ENCODE measurements at regions of chr5 and their contacts with region 1.

Region 1: DNA sequence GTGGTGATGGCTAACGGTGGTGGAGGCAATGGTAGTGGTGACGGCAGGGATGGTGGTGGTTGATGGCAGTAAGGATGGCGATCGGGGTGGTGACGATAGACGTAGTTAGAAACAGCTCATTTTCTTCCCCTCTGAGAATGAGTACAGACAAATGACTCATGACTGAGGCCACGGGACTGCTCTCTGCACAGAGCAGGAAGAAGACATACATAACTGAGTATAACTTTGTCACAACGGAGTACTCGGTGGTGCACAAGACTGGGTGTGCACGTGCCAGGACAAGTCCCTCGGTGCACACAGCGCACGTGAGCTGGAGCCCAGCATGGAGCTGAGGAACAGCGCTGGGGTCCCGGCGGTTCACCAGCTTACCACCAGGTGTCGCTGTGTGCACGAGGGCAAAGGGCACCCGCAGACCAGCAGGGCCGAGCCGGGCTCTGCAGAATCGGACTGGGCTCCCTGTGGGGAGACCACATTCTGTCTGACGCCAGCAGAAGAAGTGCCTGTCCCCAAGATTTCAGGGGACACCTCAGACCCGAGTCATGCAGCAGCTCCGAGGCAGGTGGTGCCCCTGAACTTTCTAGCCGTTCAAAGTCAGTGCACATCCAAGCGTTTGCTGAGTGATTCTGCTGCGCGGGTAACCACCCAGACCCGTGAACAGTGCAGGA is 188.6 kb downstream of the FSTL4 start:
- DNase-seq: peak; percentile 39 to 95 (median 76)
- ATAC-seq: peak; percentile 86 to 96 (median 94)
- H3K4me3 ChIP-seq: no peak overlapping the region
- H3K27ac ChIP-seq: no peak overlapping the region
- H3K4me1 ChIP-seq: no peaks in the 10 kb centered on the region
- H3K27me3 ChIP-seq: no peaks in the 10 kb centered on the region
- CTCF ChIP-seq: peak; percentile 96 to 98 (median 98)

Region 2: GRCh38 chr5:133460172-133460758 is 36.5 kb after region 1 on chr5:
- intact Hi-C with region 1: no loop called
- DNase-seq: no peak
- ATAC-seq: no peak
- H3K4me3 ChIP-seq: no peak overlapping the region
- H3K27ac ChIP-seq: no peak overlapping the region
- H3K4me1 ChIP-seq: no peaks in the 10 kb centered on the region
- H3K27me3 ChIP-seq: no peaks in the 10 kb centered on the region
- CTCF ChIP-seq: peak in 1 of 4 donors; percentile 15

Region 3: DNA sequence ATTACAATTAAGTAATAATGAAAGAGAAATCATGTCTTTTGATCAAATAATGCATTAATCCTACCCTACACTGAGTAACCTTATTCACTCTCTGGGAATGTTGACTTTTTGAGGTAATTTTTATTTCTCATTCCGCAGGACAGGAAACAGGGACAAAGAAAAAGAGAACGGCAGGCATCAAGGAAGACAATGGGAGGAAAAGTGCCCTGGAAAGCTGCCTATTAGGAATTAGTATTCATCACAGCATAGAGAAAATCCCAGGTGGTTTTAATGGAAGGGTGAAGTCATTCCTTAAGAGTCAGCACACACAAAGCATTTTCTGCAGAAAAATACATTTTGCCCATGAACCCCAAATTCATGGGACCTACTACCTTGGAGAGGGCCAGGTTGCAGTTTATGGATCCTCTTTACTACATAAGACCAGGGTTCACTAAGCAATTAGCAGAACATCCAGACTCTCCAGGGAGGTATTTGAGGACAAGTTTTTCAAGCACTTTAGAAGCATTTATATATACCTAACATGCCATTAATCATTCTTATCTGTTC is 179.2 kb after region 1 on chr5:
- intact Hi-C with region 1: loop called in 1 of 3 experiments (anchors 10 kb)
- DNase-seq: no peak
- ATAC-seq: no peak
- H3K4me3 ChIP-seq: no peak overlapping the region
- H3K27ac ChIP-seq: no peak overlapping the region
- H3K4me1 ChIP-seq: no peaks in the 10 kb centered on the region
- H3K27me3 ChIP-seq: no peaks in the 10 kb centered on the region
- CTCF ChIP-seq: no peak

Region 4: GRCh38 chr5:133610489-133611356 is 187.0 kb after region 1 on chr5:
- intact Hi-C with region 1: loop called in 2 of 3 experiments (anchors 10 kb)
- DNase-seq: peak; percentile 72 to 92 (median 78)
- ATAC-seq: peak; percentile 90 to 95 (median 92)
- H3K4me3 ChIP-seq: peak overlapping the region; percentile 13 to 62 (median 48)
- H3K27ac ChIP-seq: no peak overlapping the region
- H3K4me1 ChIP-seq: peaks cover 6 to 11% (median 8%) of the 10 kb centered on the region in 3 donors
- H3K27me3 ChIP-seq: no peaks in the 10 kb centered on the region
- CTCF ChIP-seq: peak; percentile 25 to 54 (median 44)

Region 5: DNA sequence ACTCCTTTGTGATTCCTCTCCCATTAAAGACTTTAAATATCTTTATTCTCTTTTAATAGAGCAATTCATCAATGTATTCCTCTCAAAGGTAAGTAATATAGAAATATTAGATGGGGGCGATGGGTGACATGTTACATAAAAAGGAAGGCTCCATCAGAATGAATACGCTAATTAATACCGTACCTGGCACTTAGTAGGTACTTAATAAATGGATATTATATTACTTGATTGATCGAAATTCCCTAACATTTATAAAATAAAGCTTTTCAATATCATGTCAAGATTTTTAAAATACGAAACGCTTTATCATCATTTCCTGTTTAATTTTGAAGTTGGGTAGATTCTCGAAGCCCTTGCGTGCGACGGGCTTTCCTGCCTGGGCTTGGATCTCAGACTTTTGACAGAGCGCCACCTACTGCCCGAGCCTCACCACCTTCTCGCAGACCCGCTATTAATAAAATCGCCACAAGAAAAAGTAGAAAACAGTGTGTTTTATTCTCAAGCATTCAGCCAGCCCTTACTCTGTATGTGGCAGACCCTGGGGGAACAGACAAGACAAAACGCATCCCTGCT is 445.3 kb after region 1 on chr5:
- intact Hi-C with region 1: loop called in 2 of 3 experiments (anchors 10 kb)
- DNase-seq: peak in 5 of 6 donors; percentile 56 to 84 (median 75)
- ATAC-seq: peak; percentile 77 to 95 (median 94)
- H3K4me3 ChIP-seq: no peak overlapping the region
- H3K27ac ChIP-seq: no peak overlapping the region
- H3K4me1 ChIP-seq: no peaks in the 10 kb centered on the region
- H3K27me3 ChIP-seq: no peaks in the 10 kb centered on the region
- CTCF ChIP-seq: peak; percentile 48 to 79 (median 64)

Region 6: DNA sequence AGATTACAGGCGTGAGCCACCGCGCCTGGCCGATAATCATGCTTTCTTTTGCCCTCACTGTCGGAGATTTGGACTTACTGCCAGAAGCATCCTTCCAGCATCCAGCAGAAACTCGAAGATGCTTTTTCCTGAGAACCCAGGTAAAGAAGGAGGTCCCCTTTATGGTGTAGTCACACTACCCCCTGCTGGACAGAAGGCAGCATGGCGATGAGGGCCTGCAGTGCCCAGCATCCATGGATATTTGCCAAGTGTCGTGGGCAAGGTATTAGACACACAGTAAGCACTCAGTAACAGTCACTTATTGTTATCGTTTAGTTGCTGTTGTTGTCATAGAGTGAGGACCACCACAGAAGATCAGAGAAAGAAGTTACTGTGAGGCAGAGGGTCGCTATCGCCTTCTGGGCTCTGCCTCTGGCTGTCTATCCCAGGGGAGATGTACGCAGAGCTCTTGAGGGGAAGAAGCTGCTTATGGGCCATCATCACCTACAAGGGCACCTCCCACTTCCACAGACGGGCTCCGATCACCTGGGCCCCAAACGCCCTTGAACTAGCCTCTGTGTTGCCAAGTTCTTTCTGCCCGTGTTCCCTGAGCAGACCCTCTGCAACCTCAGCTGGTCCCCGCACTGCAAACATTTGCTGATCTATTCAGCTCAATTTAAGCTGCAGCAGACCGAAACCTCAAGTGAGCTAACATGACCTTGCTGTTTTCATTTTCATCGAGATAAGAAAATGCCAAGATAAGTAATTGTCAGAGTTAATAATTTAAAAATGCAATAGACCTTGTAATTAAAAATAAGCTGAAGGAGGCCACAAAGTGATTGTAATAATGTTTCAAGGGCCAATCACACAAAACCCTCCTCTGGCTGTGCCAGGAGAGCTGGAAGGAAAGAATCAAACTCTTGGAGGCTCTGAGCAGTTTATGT is 520.8 kb after region 1 on chr5:
- intact Hi-C with region 1: loop called in 1 of 3 experiments (anchors 10 kb)
- DNase-seq: peak in 5 of 6 donors; percentile 51 to 75 (median 71)
- ATAC-seq: peak; percentile 67 to 92 (median 84)
- H3K4me3 ChIP-seq: no peak overlapping the region
- H3K27ac ChIP-seq: peak overlapping the region in 1 of 4 donors; percentile 33
- H3K4me1 ChIP-seq: peaks cover 0 to 4% (median 0%) of the 10 kb centered on the region in 3 donors
- H3K27me3 ChIP-seq: no peaks in the 10 kb centered on the region
- CTCF ChIP-seq: peak; percentile 51 to 73 (median 59)